MCF 10A (cell line): ENCODE measurements at regions of chr2 and their contacts with region 1.

Region 1: DNA sequence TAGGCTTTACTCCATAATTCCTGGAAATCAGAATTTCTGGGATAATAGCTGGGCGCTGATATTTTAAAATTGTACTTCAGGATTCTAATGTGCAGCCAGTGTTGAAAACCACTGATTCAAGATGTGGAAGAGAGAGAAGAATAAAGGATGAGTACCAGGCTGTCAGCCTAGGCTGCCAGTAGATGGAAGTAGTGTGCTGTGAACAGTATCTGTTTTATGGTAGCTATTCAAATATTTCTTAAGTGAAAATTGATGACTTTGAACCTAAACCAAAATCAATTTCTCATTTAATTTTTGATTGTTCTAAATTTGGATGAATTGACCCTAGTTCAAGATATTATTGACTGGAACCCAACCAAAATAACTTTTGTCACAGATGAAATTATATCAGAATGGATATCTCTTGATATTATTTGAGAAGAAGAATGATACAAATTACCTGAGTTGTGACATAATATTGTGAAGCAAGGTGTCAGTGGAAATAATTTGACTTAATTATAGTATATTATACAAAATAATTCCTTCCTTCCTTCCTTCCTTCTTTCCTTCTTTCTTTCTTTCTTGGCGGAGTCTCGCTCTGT is 88.1 kb downstream of the COMMD1 start:
- DNase-seq: peak; percentile 54
- H3K4me3 Mint-ChIP-seq: no peak overlapping the region
- H3K27ac Mint-ChIP-seq: no peak overlapping the region
- H3K4me1 Mint-ChIP-seq: no peaks in the 10 kb centered on the region
- H3K27me3 Mint-ChIP-seq: no peaks in the 10 kb centered on the region
- CTCF ChIP-seq: peak; percentile 67

Region 2: GRCh38 chr2:61922714-61923113 is 70.8 kb before region 1 on chr2:
- CTCF ChIA-PET with region 1: no interaction called
- POLR2A ChIA-PET with region 1: no interaction called
- intact Hi-C with region 1: loop called (anchors 1 kb)
- DNase-seq: no peak
- H3K4me3 Mint-ChIP-seq: no peak overlapping the region
- H3K27ac Mint-ChIP-seq: no peak overlapping the region
- H3K4me1 Mint-ChIP-seq: no peaks in the 10 kb centered on the region
- H3K27me3 Mint-ChIP-seq: no peaks in the 10 kb centered on the region
- CTCF ChIP-seq: no peak

Region 3: GRCh38 chr2:61980758-61981157 is 12.8 kb before region 1 on chr2:
- CTCF ChIA-PET with region 1: no interaction called
- POLR2A ChIA-PET with region 1: no interaction called
- intact Hi-C with region 1: no loop called
- DNase-seq: no peak
- H3K4me3 Mint-ChIP-seq: no peak overlapping the region
- H3K27ac Mint-ChIP-seq: no peak overlapping the region
- H3K4me1 Mint-ChIP-seq: no peaks in the 10 kb centered on the region
- H3K27me3 Mint-ChIP-seq: no peaks in the 10 kb centered on the region
- CTCF ChIP-seq: no peak

Region 4: GRCh38 chr2:62293490-62294271 is 300.1 kb after region 1 on chr2:
- CTCF ChIA-PET with region 1: interaction called, 3 read pairs
- POLR2A ChIA-PET with region 1: no interaction called
- intact Hi-C with region 1: loop called (anchors 10 kb)
- DNase-seq: peak; percentile 91
- H3K4me3 Mint-ChIP-seq: peak overlapping the region; percentile 35
- H3K27ac Mint-ChIP-seq: peak overlapping the region; percentile 51
- H3K4me1 Mint-ChIP-seq: peaks cover 7% of the 10 kb centered on the region
- H3K27me3 Mint-ChIP-seq: no peaks in the 10 kb centered on the region
- CTCF ChIP-seq: no peak